Activated CD4-positive, alpha-beta T cell treated with anti-CD3 and anti-CD28 coated beads, Interleukin-2, amount 10 ng/mL, durations not matched to agents 24 days and 14 days (primary cell): ENCODE measurements at regions of chr10 and their contacts with region 1.

Region 1: DNA sequence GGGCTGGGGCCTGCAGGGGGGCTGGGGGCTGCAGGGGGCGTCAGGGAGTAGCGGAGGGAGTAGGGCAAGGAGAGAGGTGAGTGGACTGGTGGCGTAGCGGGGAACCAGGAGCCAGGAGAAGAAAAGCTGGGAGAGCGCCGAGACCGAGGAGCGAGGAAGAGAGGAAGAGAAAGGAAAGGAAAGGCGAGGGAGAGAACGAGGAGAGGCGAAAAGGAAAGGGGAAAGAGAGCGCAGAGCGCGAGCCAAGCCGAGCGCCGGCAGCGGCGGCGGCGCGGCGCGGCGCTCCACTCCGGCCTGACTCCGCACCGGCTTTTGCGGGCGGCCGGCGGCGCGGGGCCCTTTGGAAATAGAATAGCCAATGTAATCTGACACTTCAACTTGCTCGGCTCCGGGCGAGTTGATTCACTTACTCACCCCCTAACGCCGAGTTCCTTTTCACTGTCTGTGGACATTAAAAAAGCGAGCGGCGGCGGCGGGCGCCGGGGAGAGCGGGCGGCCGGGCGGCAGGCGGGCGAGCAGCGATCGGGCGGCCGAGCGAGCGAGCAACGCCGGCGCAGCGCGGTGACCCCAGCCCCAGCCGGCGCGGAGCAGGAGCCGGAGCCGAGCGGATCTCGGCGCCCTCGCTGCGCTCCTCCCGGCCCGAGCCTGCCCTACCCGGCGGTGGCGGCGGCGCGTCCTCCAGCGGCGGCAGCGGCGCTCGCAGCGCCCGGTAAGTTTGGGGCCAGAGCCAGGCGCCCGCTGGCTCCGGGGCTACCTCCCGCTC is at the start of gene ZMIZ1:
- DNase-seq: peak; percentile 95
- H3K4me3 Mint-ChIP-seq: peak within 1 kb of the TSS; percentile 95
- H3K27ac Mint-ChIP-seq: peak within 1 kb of the TSS; percentile 87
- H3K4me1 Mint-ChIP-seq: peaks cover 53% of the 10 kb centered on the region
- H3K27me3 Mint-ChIP-seq: peaks cover 19% of the 10 kb centered on the region
- total RNA-seq, gene ZMIZ1: 66.3 and 71.7 TPM in 2 replicates

Region 2: GRCh38 chr10:78047314-78047891 is 1021.3 kb before region 1 on chr10:
- intact Hi-C with region 1: loop called (anchors 5 kb)
- DNase-seq: peak; percentile 95
- H3K4me3 Mint-ChIP-seq: no peak overlapping the region
- H3K27ac Mint-ChIP-seq: no peak overlapping the region
- H3K4me1 Mint-ChIP-seq: peaks cover 21% of the 10 kb centered on the region
- H3K27me3 Mint-ChIP-seq: no peaks in the 10 kb centered on the region

Region 3: GRCh38 chr10:78763651-78764311 is 305.0 kb before region 1 on chr10:
- intact Hi-C with region 1: loop called (anchors 10 kb)
- DNase-seq: peak; percentile 63
- H3K4me3 Mint-ChIP-seq: no peak overlapping the region
- H3K27ac Mint-ChIP-seq: peak overlapping the region; percentile 91
- H3K4me1 Mint-ChIP-seq: peaks cover 17% of the 10 kb centered on the region
- H3K27me3 Mint-ChIP-seq: no peaks in the 10 kb centered on the region

Region 4: DNA sequence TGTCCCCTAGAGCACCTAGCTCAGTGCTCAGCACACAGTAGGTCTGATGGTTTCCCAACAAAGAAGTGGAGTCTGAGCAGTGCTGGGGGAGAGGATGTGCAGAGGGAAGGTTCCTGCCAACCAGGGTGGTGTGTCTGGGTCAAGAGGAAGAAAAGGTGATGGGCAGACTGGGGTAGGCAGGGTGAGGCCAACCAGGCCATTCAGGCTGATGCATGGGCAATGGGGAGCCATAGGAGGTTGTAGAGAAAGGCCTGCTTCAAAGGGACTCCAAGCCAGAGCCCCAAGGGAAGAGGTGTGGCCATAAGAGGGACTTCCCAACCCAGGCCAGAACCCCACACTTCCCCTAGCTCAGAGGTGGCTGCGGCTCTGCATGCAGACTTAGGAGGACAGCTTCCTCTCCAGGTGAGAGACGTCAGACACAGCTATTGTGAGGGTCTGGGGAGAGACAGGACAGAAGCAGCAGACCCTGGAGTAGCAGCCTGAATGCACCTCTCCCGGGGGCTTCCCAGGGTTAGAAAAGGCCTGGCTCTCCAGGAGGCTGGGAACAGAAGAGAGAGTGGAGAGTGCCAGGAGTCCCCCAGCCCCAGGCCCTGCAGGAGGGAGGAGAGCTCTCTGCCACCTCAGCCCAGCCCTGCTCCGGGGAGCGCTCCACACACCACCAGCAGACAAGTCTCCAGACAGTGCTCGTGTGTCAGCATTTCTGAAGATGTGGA is 87.3 kb before region 1 on chr10:
- intact Hi-C with region 1: no loop called
- DNase-seq: peak; percentile 85
- H3K4me3 Mint-ChIP-seq: peak overlapping the region; percentile 61
- H3K27ac Mint-ChIP-seq: peak overlapping the region; percentile 68
- H3K4me1 Mint-ChIP-seq: peaks cover 35% of the 10 kb centered on the region
- H3K27me3 Mint-ChIP-seq: peaks cover 14% of the 10 kb centered on the region

Region 5: GRCh38 chr10:79007421-79008319 is 61.1 kb before region 1 on chr10:
- intact Hi-C with region 1: no loop called
- DNase-seq: no peak
- H3K4me3 Mint-ChIP-seq: no peak overlapping the region
- H3K27ac Mint-ChIP-seq: no peak overlapping the region
- H3K4me1 Mint-ChIP-seq: peaks cover 2% of the 10 kb centered on the region
- H3K27me3 Mint-ChIP-seq: peaks cover 17% of the 10 kb centered on the region

Region 6: DNA sequence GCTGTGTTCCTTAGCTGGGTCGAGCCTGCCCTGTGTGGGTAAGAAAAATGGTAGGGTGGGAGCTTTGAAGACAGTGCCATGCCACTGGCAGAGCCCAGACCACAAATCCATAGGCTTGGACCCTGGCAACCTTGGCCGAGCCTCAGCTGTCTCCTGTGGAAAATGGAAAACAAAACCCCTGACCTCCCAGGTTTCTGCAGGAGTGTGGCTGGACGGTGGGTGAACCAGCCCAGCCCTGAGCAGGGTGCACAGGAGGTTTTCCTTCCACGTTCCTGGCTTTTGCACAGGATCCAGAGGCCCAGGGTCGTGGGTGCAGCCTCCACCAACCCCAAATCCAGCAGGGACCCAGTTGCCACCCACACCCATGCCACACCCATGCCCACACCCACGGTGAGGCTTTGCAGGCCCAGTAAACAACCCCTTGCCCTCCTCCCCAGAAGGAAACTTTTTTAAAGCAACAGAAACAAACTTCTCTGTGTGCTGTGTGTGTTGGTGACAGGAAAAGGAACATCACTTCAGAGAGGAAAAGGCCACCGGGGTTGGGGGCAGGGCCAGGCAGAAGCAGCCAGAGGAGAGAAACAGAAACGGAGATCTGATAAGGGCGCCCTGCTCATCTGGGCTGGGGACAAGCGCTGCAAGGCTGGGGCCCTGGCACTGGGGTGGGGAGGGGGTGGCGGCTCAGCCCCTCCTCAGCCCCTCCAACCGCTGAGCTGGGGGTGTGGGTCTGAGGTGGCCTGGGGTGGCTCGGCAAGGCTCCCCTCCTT is 20.7 kb before region 1 on chr10:
- intact Hi-C with region 1: loop called (anchors 1 kb)
- DNase-seq: peak; percentile 93
- H3K4me3 Mint-ChIP-seq: peak overlapping the region; percentile 68
- H3K27ac Mint-ChIP-seq: peak overlapping the region; percentile 95
- H3K4me1 Mint-ChIP-seq: peaks cover 30% of the 10 kb centered on the region
- H3K27me3 Mint-ChIP-seq: peaks cover 4% of the 10 kb centered on the region

Region 7: DNA sequence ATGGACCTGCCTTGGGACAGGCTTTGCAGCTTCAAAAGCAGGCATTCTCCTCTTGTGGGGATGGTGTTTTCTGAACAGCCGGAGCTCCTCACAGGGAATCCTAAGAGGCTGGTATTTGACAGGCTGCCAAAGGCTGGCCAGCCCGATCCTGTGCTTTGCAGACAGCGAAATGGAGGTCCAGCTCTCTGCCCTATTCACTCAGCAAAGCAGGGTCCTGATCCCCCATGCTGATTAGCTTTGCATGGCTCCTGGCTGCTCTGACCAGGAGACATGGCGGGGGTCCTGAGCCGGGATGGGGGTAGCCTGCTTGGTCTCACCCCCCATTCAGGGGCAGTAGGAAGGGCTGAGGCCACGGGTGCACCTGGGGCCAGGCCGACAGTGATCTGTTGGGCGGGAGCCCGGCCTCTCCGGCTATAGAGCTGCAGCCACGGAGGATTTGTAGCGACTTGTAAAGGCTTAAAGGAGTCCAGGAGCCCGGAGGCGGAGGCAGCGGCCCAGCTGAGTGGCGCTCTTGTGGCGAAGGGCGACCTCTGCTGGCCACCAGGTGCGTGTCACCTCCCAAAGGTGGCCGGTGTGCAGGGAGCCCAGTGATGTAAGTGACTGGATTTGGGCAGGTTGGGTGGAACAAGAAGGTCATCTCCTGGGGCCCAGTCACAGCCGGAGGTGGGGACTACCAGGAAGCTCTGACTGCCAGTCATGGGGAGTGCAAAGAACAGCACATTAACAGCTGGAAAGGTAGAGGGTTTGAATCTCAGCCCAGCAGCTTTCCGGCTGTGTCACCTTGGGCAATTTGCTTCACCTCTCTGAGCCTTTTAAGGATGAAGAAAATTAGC is 126.6 kb after region 1 on chr10:
- intact Hi-C with region 1: loop called (anchors 5 kb)
- DNase-seq: peak; percentile 94
- H3K4me3 Mint-ChIP-seq: no peak overlapping the region
- H3K27ac Mint-ChIP-seq: no peak overlapping the region
- H3K4me1 Mint-ChIP-seq: peaks cover 3% of the 10 kb centered on the region
- H3K27me3 Mint-ChIP-seq: no peaks in the 10 kb centered on the region

Region 8: GRCh38 chr10:79286318-79286951 is 217.7 kb after region 1 on chr10:
- intact Hi-C with region 1: loop called (anchors 1 kb)
- DNase-seq: peak; percentile 90
- H3K4me3 Mint-ChIP-seq: peak overlapping the region; percentile 76
- H3K27ac Mint-ChIP-seq: peak overlapping the region; percentile 97
- H3K4me1 Mint-ChIP-seq: peaks cover 55% of the 10 kb centered on the region
- H3K27me3 Mint-ChIP-seq: no peaks in the 10 kb centered on the region